Head of caudate nucleus (tissue), 42 donors: ENCODE measurements at regions of chr5 and their contacts with region 1.

Region 1: DNA sequence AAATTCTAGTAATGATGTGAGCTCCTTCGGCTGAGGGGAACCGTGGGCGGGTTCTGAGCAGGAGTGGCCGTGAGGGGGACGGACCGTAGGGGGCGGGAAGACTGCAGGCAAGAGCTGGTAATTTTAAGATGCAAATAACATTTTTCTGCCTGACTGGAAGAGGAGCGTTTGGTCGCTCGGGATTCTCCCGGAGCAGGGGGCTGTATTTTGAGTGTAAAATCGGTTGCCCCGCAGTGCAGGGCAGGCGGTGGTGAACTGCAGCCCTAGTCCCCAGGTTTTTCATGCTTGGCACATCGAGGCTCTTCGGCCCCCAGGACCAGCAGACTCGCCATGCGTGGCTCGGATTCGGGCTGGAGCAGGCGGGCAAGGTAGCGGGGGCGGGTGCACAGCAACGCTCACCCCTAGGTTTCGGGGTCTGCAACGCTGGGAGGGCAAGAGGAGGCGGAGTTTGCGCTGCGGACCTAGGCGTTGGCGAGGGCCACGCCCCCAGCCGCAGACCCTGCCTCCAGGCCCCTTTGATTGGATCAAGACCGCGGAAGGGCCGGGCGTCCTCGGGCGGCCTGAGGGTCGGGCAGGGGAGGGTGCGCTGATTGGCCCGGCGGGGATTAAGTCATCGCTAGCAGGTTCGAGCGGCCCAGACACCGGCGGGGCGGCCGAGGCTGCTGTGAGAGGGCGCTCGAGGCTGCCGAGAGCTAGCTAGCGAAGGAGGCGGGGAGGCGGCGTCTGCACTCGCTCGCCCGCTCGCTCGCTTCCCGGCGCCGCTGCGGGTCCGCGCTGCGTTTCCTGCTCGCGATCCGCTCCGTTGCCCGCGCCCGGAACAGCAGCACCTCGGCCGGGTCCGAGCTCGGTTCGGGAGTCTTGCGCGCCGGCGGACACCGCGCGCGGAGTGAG is at the start of gene ARHGAP26:
- DNase-seq: peak; percentile 93 to 99 (median 98)

Region 2: GRCh38 chr5:142408981-142409481 is 361.0 kb before region 1 on chr5:
- intact Hi-C with region 1: no loop called
- DNase-seq: no peak

Region 3: GRCh38 chr5:142713121-142713706 is 56.8 kb before region 1 on chr5:
- intact Hi-C with region 1: loop called (anchors 10 kb)
- DNase-seq: peak; percentile 79 to 94 (median 88)

Region 4: DNA sequence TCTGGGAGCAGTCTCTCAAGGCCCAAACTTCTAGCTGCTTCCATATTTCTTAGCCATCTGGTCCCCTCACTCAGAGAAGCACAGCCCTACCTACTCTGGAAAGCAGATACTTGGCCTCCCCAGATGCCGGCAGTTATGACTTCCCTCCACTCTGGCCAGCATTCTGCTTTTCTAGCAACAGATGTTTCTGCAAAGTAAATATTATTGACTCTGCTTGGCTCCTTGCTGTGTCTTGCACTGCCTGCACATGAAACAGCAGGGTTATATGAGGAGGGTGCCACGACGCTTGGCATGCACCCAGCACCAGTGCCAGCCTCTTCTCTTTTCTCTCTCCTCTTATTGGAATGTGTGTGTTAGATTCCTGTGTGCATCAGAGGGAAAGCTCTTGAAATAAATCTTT is 99.9 kb after region 1 on chr5:
- intact Hi-C with region 1: loop called (anchors 10 kb)
- DNase-seq: no peak

Region 5: GRCh38 chr5:142946547-142947426 is 176.8 kb after region 1 on chr5:
- intact Hi-C with region 1: no loop called
- DNase-seq: peak in 2 of 42 donors; percentile 15 to 19